G401 (cell line): ENCODE measurements at regions of chr17 and their contacts with region 1.

Region 1: GRCh38 chr17:78250891-78251794 is 19.7 kb downstream of the TMEM235 start:
- DNase-seq: peak; percentile 90

Region 2: DNA sequence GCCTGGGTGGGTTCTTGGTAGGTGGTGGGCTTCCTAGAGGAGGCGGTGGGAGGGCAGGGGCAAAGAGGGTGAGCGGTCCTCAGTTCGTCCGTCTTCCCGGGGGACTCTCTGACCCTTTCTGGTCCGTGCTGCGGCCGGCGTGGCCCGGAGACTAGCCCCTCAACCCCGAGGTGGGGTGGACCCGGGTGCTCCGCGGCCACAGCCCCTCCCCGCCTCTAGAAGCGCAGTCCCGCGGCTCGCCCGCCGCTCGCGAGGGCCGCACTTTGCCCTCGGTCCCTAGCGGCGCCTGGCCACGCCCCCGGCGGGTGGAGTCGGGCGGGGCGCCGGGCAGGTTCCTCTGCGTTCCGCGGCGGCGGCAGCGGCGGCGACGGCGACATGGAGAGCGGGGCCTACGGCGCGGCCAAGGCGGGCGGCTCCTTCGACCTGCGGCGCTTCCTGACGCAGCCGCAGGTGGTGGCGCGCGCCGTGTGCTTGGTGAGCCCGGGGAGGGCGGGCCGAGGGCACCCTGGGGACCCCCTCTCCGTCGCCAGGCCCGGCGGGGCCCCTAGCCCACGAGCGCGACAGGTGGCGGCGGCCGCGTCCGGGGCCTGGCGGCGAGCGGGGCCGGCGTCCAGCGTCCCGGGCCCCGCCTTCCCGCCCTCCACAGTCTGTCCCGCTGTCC is 82.8 kb before region 1 on chr17 and contains the start of gene SYNGR2:
- in situ Hi-C with region 1: no loop called
- DNase-seq: peak; percentile 76
- total RNA-seq, gene SYNGR2: 67.0 and 71.8 TPM in 2 replicates

Region 3: DNA sequence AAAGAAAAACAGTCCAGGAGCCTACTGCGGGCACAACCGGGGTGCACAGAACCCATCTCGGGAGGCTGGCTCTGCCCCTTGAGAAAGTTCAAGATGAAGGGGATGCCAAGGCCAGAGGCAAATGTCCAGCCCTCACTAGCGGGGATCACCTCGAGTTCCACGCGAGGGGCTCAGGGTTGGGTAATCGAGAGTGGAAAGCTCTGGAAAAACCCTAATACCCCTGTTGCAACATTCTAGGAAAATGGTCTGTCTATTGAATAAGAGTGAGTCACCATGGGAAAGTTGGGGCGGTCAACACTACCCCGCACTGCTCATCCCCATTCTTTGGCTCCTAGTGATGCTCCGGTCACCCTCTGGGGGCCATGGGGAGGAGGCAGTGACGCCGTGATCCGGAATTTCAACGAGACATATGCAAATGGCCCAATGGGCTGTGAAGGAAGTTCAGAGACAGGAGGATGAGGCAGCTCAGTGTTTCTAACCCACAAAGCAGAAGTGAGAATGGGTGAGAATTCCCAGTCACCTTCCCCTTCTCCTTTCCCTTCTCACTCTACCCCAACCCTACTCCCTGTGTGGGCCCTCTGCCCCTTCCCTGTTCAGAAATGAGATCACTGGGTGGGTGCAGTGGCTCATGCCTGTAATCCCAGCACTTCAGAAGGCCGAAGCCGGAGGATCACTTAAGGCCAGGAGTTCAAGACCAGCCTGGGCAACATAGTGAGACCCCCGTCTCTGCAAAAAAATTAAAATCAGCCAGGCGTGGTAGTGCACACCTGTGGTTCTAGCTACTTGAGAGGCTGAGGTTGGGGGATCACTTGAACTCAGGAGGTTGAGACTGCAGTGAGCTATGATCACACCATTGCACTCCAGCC is 86.3 kb after region 1 on chr17:
- in situ Hi-C with region 1: no loop called
- DNase-seq: no peak

Region 4: GRCh38 chr17:78442648-78443128 is 191.5 kb after region 1 on chr17:
- in situ Hi-C with region 1: loop called (anchors 25 kb)
- DNase-seq: no peak